Activated CD4-positive, alpha-beta memory T cell treated with anti-CD3 and anti-CD28 coated beads, Interleukin-2, amount 10 ng/mL, durations not matched to agents 7 days and 5 days (primary cell): ENCODE measurements at regions of chr10 and their contacts with region 1.

Region 1: DNA sequence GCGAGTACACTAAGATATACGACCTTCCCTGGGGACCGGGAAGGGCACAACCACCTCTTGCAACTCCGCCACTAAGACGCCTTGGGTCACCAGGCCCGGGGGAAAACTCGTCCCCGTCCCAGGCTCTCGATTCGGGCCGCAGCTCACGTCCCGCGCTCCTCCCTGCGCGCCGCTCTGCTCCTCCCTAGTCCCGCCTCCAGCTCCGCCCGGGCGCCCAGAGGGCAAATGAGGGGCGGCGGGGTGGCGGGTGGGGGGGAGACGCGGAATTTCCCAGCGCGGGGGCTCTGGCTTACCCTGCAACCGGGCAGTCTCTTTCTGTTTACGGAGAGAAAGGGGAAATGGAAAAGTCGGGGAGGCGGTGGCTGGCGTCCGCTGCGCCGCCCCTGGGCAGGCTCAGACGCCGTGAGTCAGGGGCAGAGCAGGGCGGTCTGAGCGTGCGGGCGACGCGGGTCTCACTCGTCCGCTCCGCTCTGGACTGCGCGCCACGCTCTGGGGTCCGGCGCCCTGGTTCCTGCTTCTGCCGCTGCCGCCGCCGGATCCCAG is at the start of gene MAP3K8:
- DNase-seq: peak; percentile 85
- H3K4me3 Mint-ChIP-seq: peak within 1 kb of the TSS; percentile 85
- H3K27ac Mint-ChIP-seq: peak within 1 kb of the TSS; percentile 84
- H3K4me1 Mint-ChIP-seq: peaks cover 54% of the 10 kb centered on the region
- H3K27me3 Mint-ChIP-seq: no peaks in the 10 kb centered on the region
- total RNA-seq, gene MAP3K8: 39.5 to 40.3 TPM

Region 2: GRCh38 chr10:30313579-30314350 is 120.0 kb before region 1 on chr10:
- CTCF ChIA-PET with region 1: no interaction called
- POLR2A ChIA-PET with region 1: no interaction called
- DNase-seq: no peak
- H3K4me3 Mint-ChIP-seq: no peak overlapping the region
- H3K27ac Mint-ChIP-seq: no peak overlapping the region
- H3K4me1 Mint-ChIP-seq: no peaks in the 10 kb centered on the region
- H3K27me3 Mint-ChIP-seq: no peaks in the 10 kb centered on the region

Region 3: GRCh38 chr10:30392564-30392990 is 41.2 kb before region 1 on chr10:
- CTCF ChIA-PET with region 1: interaction called, 10 read pairs
- POLR2A ChIA-PET with region 1: interaction called, 3 read pairs
- DNase-seq: peak; percentile 80
- H3K4me3 Mint-ChIP-seq: no peak overlapping the region
- H3K27ac Mint-ChIP-seq: no peak overlapping the region
- H3K4me1 Mint-ChIP-seq: peaks cover 9% of the 10 kb centered on the region
- H3K27me3 Mint-ChIP-seq: peaks cover 39% of the 10 kb centered on the region

Region 4: DNA sequence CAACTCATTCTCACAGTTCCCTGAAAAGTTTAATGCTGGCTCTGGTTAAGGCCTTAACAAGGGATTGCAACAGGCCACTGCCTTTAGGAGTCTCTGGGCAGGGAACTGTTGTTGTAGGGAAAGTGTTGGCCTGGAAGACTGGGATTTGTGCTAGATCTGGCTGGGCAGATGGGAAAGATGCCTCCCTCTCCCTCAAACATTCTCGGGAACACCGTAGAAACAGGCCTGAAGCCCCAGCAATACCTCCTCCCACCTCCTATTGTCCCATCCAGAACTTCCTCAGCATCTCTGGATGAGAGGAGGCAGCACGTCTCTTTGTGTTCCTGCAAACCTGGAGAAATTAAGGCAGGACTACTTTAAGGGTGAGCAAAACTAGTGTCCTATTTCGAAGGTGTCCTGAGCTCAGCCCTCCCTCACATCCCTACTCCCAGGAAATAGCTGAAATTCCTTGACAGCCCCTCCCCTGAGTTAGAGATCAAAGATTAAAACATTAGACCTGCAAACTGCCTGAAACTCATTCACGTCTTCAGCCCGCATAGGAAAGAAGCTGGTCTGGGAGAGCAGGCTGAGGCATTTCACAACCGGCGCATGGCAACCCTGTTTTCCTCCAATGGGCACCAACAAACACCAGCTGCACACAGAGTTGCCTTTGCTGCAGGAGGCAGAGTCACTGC is 10.7 kb before region 1 on chr10:
- CTCF ChIA-PET with region 1: interaction called, 11 read pairs
- POLR2A ChIA-PET with region 1: interaction called, 106 read pairs
- DNase-seq: no peak
- H3K4me3 Mint-ChIP-seq: no peak overlapping the region
- H3K27ac Mint-ChIP-seq: no peak overlapping the region
- H3K4me1 Mint-ChIP-seq: peaks cover 58% of the 10 kb centered on the region
- H3K27me3 Mint-ChIP-seq: no peaks in the 10 kb centered on the region

Region 5: GRCh38 chr10:30456266-30456665 is 22.5 kb after region 1 on chr10:
- CTCF ChIA-PET with region 1: interaction called, 4 read pairs
- POLR2A ChIA-PET with region 1: interaction called, 44 read pairs
- DNase-seq: peak; percentile 63
- H3K4me3 Mint-ChIP-seq: peak overlapping the region; percentile 54
- H3K27ac Mint-ChIP-seq: peak overlapping the region; percentile 52
- H3K4me1 Mint-ChIP-seq: peaks cover 37% of the 10 kb centered on the region
- H3K27me3 Mint-ChIP-seq: no peaks in the 10 kb centered on the region

Region 6: GRCh38 chr10:30534465-30535144 is 100.8 kb after region 1 on chr10:
- CTCF ChIA-PET with region 1: interaction called, 67 read pairs
- POLR2A ChIA-PET with region 1: interaction called, 68 read pairs
- DNase-seq: peak; percentile 76
- H3K4me3 Mint-ChIP-seq: no peak overlapping the region
- H3K27ac Mint-ChIP-seq: no peak overlapping the region
- H3K4me1 Mint-ChIP-seq: peaks cover 45% of the 10 kb centered on the region
- H3K27me3 Mint-ChIP-seq: no peaks in the 10 kb centered on the region